H1 (cell line): ENCODE measurements at regions of chr1 and their contacts with region 1.

Region 1: DNA sequence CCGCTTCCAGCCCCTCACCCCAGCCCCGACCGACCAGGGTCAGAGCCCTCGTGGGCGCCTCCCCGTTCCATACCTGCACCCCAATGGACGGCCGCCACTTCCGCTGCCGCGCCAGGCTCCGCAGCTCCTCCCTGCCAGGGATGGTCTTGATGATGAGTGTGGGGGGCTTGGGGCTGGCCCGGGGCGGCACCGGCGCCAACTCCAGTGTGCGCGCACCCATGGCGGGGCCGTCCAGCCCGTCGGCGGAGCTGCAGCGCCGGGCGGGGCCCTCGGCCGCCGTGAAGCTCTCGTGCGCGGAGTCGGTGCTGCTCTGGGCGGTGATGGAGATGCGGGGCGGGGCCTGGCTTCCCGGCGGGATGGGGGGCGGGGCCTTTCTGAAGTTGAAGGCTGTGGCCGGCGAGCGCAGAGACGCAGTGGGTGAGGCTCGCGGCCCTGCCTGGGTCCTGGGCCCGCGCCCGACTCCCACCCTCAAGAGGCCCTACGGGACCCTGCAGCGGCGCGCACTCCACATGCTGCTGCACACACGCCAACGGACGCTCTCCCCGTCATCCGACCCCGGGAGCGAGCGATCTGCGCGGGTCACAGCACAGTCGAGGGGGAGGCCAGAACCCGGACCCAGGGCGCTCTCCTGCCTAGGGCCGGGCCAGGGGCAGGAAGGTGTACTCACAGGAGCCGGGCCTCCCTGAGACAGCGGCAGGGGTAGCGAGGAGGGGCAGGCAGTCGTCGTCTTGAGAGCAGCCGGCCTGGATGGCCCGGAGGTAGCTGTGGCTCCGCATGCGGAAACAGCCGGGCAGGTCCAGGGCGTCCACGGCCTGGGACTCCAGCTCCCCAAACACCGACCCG is 26.1 kb upstream of the SMIM12 start:
- DNase-seq: peak; percentile 25 to 95
- H3K4me3 ChIP-seq: peak overlapping the region; percentile 45 to 74 (median 69)
- H3K27ac ChIP-seq: no peak overlapping the region
- H3K4me1 ChIP-seq: peaks cover 0 to 10% (median 7%) of the 10 kb centered on the region in 4 experiments; a peak in 6 of 7 replicates
- H3K27me3 ChIP-seq: peaks cover 0 to 16% (median 13%) of the 10 kb centered on the region in 4 experiments; a peak in 6 of 7 replicates
- CTCF ChIP-seq: no peak
- EP300 ChIP-seq: no peak
- POLR2A ChIP-seq: peak in 1 of 2 experiments; percentile 63; a peak in 2 of 3 replicates
- RAD21 ChIP-seq: no peak

Region 2: DNA sequence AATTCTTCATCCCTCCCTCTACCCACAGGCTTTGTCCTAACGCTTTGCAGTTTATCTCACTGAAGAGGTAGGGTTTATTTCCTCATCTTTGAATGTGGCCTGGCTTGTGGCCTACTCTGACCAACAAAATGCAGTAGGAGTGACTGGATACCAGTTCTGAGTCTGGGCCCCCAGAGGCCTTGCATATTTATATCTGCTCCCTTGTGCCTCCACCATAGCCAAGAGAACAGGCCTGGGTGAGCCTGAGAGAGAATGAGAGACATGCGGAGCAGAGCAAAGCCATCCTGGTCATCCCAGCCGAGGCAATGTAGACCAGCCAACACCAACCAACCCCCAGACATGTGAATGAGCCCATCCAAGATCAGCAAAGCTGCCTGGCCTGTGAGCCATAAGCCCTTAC is 56.4 kb before region 1 on chr1:
- CTCF ChIA-PET with region 1: no interaction called
- POLR2A ChIA-PET with region 1: no interaction called
- DNase-seq: peak in 1 of 2 experiments; percentile 19
- H3K4me3 ChIP-seq: no peak overlapping the region
- H3K27ac ChIP-seq: no peak overlapping the region
- H3K4me1 ChIP-seq: no peaks in the 10 kb centered on the region; a peak in 3 of 7 replicates
- H3K27me3 ChIP-seq: no peaks in the 10 kb centered on the region
- CTCF ChIP-seq: no peak
- EP300 ChIP-seq: no peak
- POLR2A ChIP-seq: no peak
- RAD21 ChIP-seq: no peak

Region 3: GRCh38 chr1:34859446-34860200 is 26.0 kb before region 1 on chr1 and contains the start of gene SMIM12:
- CTCF ChIA-PET with region 1: interaction called, 81 read pairs
- POLR2A ChIA-PET with region 1: interaction called, 4 read pairs
- DNase-seq: peak; percentile 65 to 88
- H3K4me3 ChIP-seq: peak within 1 kb of the TSS; percentile 75 to 100 (median 94)
- H3K27ac ChIP-seq: peak within 1 kb of the TSS; percentile 39; the same call in 1 of the 2 replicates
- H3K4me1 ChIP-seq: peaks cover 0 to 7% (median 0%) of the 10 kb centered on the region in 4 experiments; a peak in 2 of 7 replicates
- H3K27me3 ChIP-seq: peaks cover 0 to 2% (median 0%) of the 10 kb centered on the region in 4 experiments; a peak in 1 of 7 replicates
- CTCF ChIP-seq: peak; percentile 74 to 89 (median 79)
- EP300 ChIP-seq: 0 out of 3 replicates have a peak, but pooled peaks of 1 of the 2 experiments have one; percentile 43
- POLR2A ChIP-seq: peak; percentile 70 to 92
- RAD21 ChIP-seq: peak; percentile 23 to 36; a peak in 3 of 4 replicates
- total RNA-seq, gene SMIM12: 40.9 and 42.6 TPM in 2 replicates

Region 4: DNA sequence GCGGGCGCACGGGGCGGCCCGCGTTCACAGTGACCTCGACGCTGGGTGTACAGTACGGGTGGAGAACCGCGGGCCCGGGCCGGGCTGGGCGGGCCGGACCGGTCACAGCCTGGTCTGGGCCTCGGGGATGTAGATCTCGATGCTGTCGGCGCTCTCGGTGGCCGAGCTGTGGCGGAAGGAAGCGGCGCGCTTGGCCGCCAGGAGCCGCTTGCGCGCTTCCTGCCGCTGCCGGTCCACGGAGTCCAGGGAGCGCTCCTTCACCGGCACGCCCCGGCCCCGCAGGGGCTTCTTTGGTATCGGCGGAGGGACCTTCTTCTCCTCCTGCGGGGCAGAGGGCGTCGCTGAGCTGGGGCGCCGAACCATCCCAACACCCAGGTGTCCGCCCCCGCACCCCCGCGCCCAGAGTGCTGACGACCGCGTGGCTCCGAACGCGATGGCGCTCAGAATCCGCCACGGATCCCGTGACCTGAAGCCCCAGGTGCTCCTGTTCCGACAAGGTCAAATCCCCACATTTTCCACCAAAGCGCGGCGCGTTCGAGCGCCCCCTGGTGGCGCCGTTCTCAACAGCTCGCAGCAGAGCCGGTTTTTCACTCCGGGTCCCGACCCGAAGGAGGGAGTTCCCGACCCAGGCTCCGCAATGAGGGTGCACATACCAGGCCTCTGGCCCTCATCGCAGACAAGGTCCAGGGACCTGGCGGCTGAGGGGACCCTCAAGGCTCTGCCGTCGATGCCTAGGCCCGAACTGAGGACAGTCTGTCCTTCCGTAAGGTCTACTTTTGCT is 19.5 kb before region 1 on chr1:
- CTCF ChIA-PET with region 1: interaction called, 81 read pairs
- POLR2A ChIA-PET with region 1: interaction called, 5 read pairs
- DNase-seq: peak; percentile 68 to 98
- H3K4me3 ChIP-seq: peak overlapping the region; percentile 33 to 69 (median 62)
- H3K27ac ChIP-seq: peak overlapping the region; percentile 17; the same call in 1 of the 2 replicates
- H3K4me1 ChIP-seq: peaks cover 0 to 7% (median 3%) of the 10 kb centered on the region in 4 experiments; a peak in 4 of 7 replicates
- H3K27me3 ChIP-seq: peaks cover 0 to 11% (median 4%) of the 10 kb centered on the region in 4 experiments; a peak in 2 of 7 replicates
- CTCF ChIP-seq: peak; percentile 77 to 89 (median 89)
- EP300 ChIP-seq: peak in 1 of 2 experiments; percentile 34; a peak in 1 of 3 replicates
- POLR2A ChIP-seq: peak in 1 of 2 experiments; percentile 54; a peak in 2 of 3 replicates
- RAD21 ChIP-seq: peak; percentile 46 to 61

Region 5: GRCh38 chr1:34896613-34897012 is 11.0 kb after region 1 on chr1:
- CTCF ChIA-PET with region 1: interaction called, 9 read pairs
- POLR2A ChIA-PET with region 1: interaction called, 10 read pairs
- DNase-seq: no peak
- H3K4me3 ChIP-seq: no peak overlapping the region
- H3K27ac ChIP-seq: no peak overlapping the region
- H3K4me1 ChIP-seq: peaks cover 0 to 3% (median 0%) of the 10 kb centered on the region in 4 experiments; a peak in 1 of 7 replicates
- H3K27me3 ChIP-seq: no peaks in the 10 kb centered on the region
- CTCF ChIP-seq: peak in 1 of 3 experiments; percentile 3; a peak in 1 of 4 replicates
- EP300 ChIP-seq: no peak
- POLR2A ChIP-seq: no peak
- RAD21 ChIP-seq: peak; percentile 54 to 56

Region 6: DNA sequence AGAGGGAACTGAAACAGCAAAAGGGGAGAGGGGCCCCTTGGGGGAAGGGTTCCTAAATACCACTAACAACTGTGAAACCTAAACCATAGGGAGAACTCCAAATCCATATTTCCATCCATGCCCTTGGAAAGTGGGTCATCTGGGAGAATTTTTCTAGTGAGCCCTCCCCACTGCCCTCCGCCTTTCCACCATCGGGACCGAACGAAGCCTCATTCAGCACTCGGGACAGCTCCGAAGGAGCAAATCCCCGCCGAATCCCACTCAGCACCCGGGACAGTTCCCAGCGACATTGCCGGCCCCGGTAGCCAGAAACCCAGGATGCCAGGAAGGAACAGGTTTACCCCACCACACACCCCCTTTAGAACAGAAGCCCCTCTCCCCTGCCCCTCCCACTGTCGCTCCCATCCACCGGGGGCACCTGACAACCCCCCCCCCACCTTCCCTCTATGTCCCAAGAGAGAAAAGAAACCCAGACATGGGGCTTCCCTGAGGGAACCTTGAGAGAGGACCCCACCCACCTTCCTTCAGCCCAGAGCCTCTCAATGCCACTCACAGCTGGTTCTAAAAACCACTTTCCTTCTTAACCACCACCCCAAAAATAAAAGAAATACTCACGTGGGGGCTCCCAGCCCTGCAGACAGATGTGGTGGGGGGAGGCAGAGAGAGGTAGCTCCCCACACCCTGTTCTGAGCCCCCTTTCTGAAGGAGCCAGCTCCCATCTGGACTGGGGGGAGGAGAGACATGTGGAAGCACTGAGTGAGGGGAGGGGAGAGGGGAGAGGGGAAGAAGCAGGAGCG is 39.3 kb after region 1 on chr1:
- CTCF ChIA-PET with region 1: interaction called, 4 read pairs
- POLR2A ChIA-PET with region 1: interaction called, 12 read pairs
- DNase-seq: peak in 1 of 2 experiments; percentile 96
- H3K4me3 ChIP-seq: no peak overlapping the region
- H3K27ac ChIP-seq: no peak overlapping the region
- H3K4me1 ChIP-seq: peaks cover 8 to 21% (median 11%) of the 10 kb centered on the region in 4 experiments
- H3K27me3 ChIP-seq: peaks cover 0 to 22% (median 15%) of the 10 kb centered on the region in 4 experiments; a peak in 6 of 7 replicates
- CTCF ChIP-seq: no peak
- EP300 ChIP-seq: peak in 1 of 2 experiments; percentile 83; a peak in 2 of 3 replicates
- POLR2A ChIP-seq: no peak
- RAD21 ChIP-seq: peak in 1 of 2 experiments; percentile 26; a peak in 1 of 4 replicates

Region 7: GRCh38 chr1:34946211-34946610 is 60.6 kb after region 1 on chr1:
- CTCF ChIA-PET with region 1: no interaction called
- POLR2A ChIA-PET with region 1: no interaction called
- DNase-seq: no peak
- H3K4me3 ChIP-seq: no peak overlapping the region
- H3K27ac ChIP-seq: no peak overlapping the region
- H3K4me1 ChIP-seq: no peaks in the 10 kb centered on the region
- H3K27me3 ChIP-seq: no peaks in the 10 kb centered on the region
- CTCF ChIP-seq: no peak
- EP300 ChIP-seq: no peak
- POLR2A ChIP-seq: no peak
- RAD21 ChIP-seq: no peak

Region 8: GRCh38 chr1:34994878-34995277 is 109.3 kb after region 1 on chr1:
- CTCF ChIA-PET with region 1: no interaction called
- POLR2A ChIA-PET with region 1: no interaction called
- DNase-seq: no peak
- H3K4me3 ChIP-seq: no peak overlapping the region
- H3K27ac ChIP-seq: no peak overlapping the region
- H3K4me1 ChIP-seq: no peaks in the 10 kb centered on the region
- H3K27me3 ChIP-seq: no peaks in the 10 kb centered on the region
- CTCF ChIP-seq: no peak
- EP300 ChIP-seq: no peak
- POLR2A ChIP-seq: no peak
- RAD21 ChIP-seq: no peak